ENCODE measurements at regions of chr2 and their contacts with region 1.

Region 1: GRCh38 chr2:217886720-217887309 is 116.0 kb downstream of the TNS1 start:
- DNase-seq: peak; percentile 87
- H3K4me3 Mint-ChIP-seq: no peak overlapping the region
- H3K27ac Mint-ChIP-seq: no peak overlapping the region
- H3K4me1 Mint-ChIP-seq: no peaks in the 10 kb centered on the region
- H3K27me3 Mint-ChIP-seq: peaks cover 13% of the 10 kb centered on the region
- CTCF ChIP-seq: peak; percentile 75

Region 2: GRCh38 chr2:216539714-216540241 is 1347.0 kb before region 1 on chr2:
- CTCF ChIA-PET with region 1: no interaction called
- POLR2A ChIA-PET with region 1: no interaction called
- intact Hi-C with region 1: no loop called
- DNase-seq: peak; percentile 95
- H3K4me3 Mint-ChIP-seq: no peak overlapping the region
- H3K27ac Mint-ChIP-seq: peak overlapping the region; percentile 75
- H3K4me1 Mint-ChIP-seq: peaks cover 44% of the 10 kb centered on the region
- H3K27me3 Mint-ChIP-seq: no peaks in the 10 kb centered on the region
- CTCF ChIP-seq: no peak

Region 3: DNA sequence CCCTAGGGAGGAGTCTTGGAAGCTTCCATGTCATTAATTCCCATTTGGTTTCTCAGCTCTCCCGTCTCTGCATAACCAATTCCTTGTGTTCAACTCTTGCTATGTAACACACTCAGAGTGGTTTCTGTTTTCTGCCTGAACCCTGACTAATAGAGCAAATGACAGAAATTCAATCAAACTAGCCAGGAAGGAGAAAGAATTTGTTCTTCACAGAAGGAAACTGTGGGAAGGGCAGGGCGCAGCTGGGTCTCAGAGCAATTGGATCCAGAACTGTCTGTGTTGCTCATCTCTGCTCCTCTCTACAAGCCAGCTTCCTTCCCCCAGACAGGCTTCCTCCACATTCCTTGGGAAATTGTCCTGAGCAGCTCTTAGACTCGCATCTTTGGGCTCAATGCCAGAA is 153.8 kb before region 1 on chr2:
- CTCF ChIA-PET with region 1: no interaction called
- POLR2A ChIA-PET with region 1: no interaction called
- intact Hi-C with region 1: no loop called
- DNase-seq: no peak
- H3K4me3 Mint-ChIP-seq: no peak overlapping the region
- H3K27ac Mint-ChIP-seq: no peak overlapping the region
- H3K4me1 Mint-ChIP-seq: no peaks in the 10 kb centered on the region
- H3K27me3 Mint-ChIP-seq: peaks cover 17% of the 10 kb centered on the region
- CTCF ChIP-seq: no peak

Region 4: GRCh38 chr2:217775920-217776492 is 110.8 kb before region 1 on chr2:
- CTCF ChIA-PET with region 1: interaction called, 19 read pairs
- POLR2A ChIA-PET with region 1: no interaction called
- intact Hi-C with region 1: no loop called
- DNase-seq: no peak
- H3K4me3 Mint-ChIP-seq: no peak overlapping the region
- H3K27ac Mint-ChIP-seq: no peak overlapping the region
- H3K4me1 Mint-ChIP-seq: no peaks in the 10 kb centered on the region
- H3K27me3 Mint-ChIP-seq: peaks cover 37% of the 10 kb centered on the region
- CTCF ChIP-seq: no peak

Region 5: DNA sequence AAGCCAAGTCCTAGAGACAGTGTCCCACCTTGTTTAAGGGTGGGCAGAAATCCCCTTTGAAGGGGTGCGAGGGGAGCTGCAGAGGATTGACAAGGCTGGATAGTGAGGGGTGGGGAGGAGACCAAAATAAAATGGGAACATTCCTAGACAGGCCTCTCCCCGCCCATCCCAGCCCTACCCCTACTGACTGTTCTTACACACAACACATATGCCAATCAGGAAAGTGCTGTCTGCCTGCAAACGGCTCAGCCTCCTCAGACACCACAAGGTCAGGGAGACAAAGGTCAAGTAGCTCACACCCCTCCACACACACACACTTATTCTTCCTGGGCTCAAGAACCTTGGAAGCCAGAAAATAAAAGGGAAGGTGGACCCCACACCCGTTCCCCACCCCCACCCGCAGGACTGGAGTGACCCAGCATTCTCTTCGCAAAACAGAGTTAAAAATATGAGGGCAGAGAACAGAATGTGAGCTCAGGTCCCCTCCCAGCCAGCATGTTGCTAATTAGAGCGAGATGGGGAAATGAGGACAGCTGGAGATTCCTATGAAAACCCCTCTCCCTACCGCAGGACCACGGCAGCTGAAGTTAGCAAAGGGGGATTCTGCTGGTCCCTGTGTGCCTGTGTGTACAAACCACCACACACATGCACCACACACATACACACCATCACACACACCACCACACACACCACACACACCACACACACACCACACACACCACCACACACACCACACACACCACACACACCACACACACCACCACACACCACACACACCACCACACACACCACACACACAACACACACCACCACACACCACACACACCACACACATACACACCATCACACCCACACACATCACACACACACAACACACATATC is 81.8 kb before region 1 on chr2:
- CTCF ChIA-PET with region 1: interaction called, 19 read pairs
- POLR2A ChIA-PET with region 1: no interaction called
- intact Hi-C with region 1: no loop called
- DNase-seq: no peak
- H3K4me3 Mint-ChIP-seq: no peak overlapping the region
- H3K27ac Mint-ChIP-seq: no peak overlapping the region
- H3K4me1 Mint-ChIP-seq: peaks cover 7% of the 10 kb centered on the region
- H3K27me3 Mint-ChIP-seq: no peaks in the 10 kb centered on the region
- CTCF ChIP-seq: no peak

Region 6: DNA sequence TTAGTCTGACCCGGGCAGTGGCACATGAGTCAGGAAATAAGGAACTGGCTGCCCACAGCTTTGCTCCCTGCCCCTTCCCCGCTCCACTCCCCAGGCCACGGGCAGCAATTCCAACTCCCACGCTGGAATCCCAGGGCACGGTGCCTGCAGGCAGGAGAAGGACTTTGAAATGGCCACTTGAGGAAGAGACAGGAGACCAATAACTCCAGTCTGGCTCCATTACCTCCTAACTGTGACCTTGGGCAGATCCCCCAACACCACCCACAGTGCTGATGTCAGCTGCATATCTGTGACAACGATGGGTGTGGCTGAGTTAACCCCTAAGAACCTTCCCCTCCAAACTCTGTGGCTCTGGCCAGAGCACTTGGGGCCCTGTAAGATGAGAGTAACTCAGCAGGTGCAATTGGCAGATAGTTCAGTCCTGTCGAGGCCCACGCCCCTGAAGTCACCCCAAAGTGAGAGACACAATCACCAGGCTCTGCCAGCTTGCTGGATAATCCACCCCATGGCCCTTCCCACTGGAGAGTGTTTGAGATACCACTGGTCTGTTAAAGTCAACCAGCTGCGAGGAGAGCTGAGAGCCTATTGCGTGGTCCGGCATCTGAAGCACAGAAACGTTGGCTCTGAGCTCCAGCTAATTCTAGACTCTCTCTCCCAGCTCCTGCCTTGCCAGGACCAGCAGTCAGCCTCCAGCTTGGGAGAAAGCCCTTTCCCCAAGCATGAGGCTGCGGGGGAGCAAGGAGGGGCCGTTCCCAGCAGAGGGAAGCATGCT is 59.2 kb before region 1 on chr2:
- CTCF ChIA-PET with region 1: interaction called, 16 read pairs
- POLR2A ChIA-PET with region 1: no interaction called
- intact Hi-C with region 1: no loop called
- DNase-seq: no peak
- H3K4me3 Mint-ChIP-seq: no peak overlapping the region
- H3K27ac Mint-ChIP-seq: peak overlapping the region; percentile 61
- H3K4me1 Mint-ChIP-seq: peaks cover 20% of the 10 kb centered on the region
- H3K27me3 Mint-ChIP-seq: no peaks in the 10 kb centered on the region
- CTCF ChIP-seq: no peak

Region 7: GRCh38 chr2:217868911-217869334 is 17.9 kb before region 1 on chr2:
- CTCF ChIA-PET with region 1: interaction called, 12 read pairs
- POLR2A ChIA-PET with region 1: no interaction called
- intact Hi-C with region 1: no loop called
- DNase-seq: no peak
- H3K4me3 Mint-ChIP-seq: no peak overlapping the region
- H3K27ac Mint-ChIP-seq: no peak overlapping the region
- H3K4me1 Mint-ChIP-seq: no peaks in the 10 kb centered on the region
- H3K27me3 Mint-ChIP-seq: no peaks in the 10 kb centered on the region
- CTCF ChIP-seq: no peak

Region 8: GRCh38 chr2:217899231-217900009 is 12.6 kb after region 1 on chr2:
- CTCF ChIA-PET with region 1: interaction called, 61 read pairs
- POLR2A ChIA-PET with region 1: interaction called, 3 read pairs
- intact Hi-C with region 1: no loop called
- DNase-seq: peak; percentile 81
- H3K4me3 Mint-ChIP-seq: no peak overlapping the region
- H3K27ac Mint-ChIP-seq: no peak overlapping the region
- H3K4me1 Mint-ChIP-seq: peaks cover 6% of the 10 kb centered on the region
- H3K27me3 Mint-ChIP-seq: no peaks in the 10 kb centered on the region
- CTCF ChIP-seq: peak; percentile 57

Region 9: DNA sequence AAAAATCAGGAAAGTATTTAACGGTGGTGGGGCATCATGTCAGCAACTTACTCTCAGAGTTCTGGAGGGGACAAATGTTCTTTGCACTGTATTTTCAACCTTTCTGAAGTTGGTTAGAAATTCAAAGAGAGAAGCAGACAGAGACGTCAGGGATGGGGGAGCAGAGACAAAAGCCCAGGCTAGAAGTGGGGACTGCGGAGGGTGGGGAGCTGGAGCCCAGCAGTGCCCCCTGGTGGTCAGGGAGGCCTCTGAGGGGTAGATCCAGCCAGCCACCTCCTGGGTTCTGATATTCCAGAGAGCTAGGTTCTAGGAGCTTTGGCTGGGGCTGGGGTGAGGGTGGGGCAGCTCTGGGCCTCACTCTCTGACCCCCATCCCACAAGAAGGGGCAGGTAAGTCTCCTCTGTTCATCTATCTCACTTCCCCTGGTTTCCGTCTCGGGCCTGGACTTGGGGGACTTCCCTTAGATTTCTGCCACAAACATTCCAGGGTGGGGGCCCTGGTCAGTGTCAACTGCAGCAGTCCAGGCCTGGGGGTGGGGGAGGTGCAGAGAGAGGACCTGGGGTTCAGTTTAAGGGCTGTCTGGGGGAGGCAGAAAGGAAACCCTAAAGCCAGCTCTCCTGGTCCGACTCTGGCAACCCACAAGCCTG is 107.1 kb after region 1 on chr2:
- CTCF ChIA-PET with region 1: interaction called, 37 read pairs
- POLR2A ChIA-PET with region 1: no interaction called
- intact Hi-C with region 1: no loop called
- DNase-seq: peak; percentile 47
- H3K4me3 Mint-ChIP-seq: no peak overlapping the region
- H3K27ac Mint-ChIP-seq: no peak overlapping the region
- H3K4me1 Mint-ChIP-seq: peaks cover 28% of the 10 kb centered on the region
- H3K27me3 Mint-ChIP-seq: no peaks in the 10 kb centered on the region
- CTCF ChIP-seq: peak; percentile 64

Measured in MCF 10A (cell line).